ENCODE measurements at regions of chr19 and their contacts with region 1.

Region 1: DNA sequence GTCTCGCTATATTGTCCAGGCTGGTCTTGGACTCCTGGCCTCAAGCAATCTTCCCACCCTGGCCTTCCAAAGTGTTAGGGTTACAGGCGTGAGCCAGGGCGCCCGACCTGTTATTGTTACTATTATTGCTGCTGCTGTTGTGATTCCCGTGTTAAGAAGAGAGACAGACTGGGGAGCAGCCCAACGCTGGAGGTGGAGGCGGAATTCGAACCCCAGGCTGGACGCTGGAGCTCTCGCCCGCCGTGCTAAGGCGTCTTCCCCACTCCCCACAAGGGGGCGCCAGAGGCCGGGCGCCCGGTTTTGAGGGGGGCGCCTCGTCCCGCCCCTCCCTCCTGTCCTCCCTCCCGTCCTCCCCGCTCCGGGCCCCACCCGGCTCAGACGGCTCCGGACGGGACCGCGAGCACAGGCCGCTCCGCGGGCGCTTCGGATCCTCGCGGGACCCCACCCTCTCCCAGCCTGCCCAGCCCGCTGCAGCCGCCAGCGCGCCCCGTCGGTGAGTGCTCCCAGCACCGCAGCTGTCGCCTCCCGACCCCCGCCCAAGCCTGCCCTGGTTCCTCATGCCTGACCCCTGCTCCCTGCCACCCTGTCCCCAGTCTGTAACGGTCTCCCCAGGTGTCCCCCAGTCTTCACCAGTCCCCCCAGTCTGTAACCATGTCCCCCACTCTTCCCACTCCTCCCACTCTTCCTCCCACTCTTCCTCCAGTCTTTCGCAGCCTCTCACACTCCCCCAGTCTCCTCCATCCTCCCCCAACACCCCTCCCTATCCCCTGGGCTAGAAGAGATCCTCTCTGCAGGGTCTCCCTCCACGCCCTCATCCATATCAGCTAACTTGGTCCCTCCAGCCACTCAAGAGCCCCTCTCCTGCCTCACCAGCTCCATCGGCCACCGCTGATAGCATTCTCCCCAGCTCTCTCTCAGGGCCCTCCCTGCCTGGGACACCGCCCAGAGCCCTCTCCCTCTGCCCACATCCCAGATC is at the start of gene EHD2:
- DNase-seq: no peak
- ATAC-seq: peak; percentile 63
- H3K4me3 ChIP-seq: no peak within 1 kb of the TSS
- H3K27ac ChIP-seq: no peak within 1 kb of the TSS
- H3K4me1 ChIP-seq: no peaks in the 10 kb centered on the region
- H3K27me3 ChIP-seq: no peaks in the 10 kb centered on the region
- CTCF ChIP-seq: peak; percentile 43 to 75 (median 52)
- EP300 ChIP-seq: no peak
- POLR2A ChIP-seq: no peak
- RAD21 ChIP-seq: peak; percentile 46
- polyA plus RNA-seq, gene EHD2: not detected

Region 2: DNA sequence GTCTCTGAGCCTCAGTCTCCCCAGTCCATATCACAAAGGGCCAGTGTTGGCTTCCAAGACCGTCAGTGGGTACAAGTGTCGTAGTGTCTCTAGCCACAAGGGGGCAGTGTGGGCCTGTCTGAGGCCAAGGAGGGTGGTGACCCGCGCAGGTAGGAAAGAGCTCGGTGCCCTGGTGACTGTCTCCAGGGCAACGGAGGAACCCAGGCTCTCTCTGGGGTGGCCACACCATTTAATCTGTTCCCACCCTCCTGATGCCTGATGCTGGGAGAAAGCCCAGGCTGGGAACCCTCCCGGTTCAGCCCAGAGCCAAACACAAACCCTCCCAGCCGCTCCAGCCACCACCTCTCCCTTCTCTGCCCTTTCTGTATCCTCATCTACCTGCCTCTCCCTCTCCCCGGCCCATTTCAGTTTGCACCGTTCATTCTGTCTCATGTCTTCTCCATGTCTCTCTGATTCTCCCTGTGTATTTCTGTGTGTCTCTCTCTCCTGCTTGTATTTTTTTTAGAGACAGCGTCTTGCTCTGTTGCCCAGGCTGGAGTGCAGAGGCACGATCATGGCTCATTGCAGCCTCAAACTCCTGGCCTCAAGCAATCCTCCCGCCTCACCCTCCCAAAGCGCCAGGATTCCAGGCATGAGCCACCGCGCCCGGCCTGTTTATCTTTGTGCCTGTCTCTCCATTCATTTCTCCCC is 276.5 kb before region 1 on chr19:
- CTCF ChIA-PET with region 1: interaction called, 163 read pairs
- POLR2A ChIA-PET with region 1: no interaction called
- RAD21 ChIA-PET with region 1: interaction called, 47 read pairs
- SMC1A ChIA-PET with region 1: interaction called, 49 read pairs
- in situ Hi-C with region 1: loop called (anchors 5 kb)
- intact Hi-C with region 1: no loop called
- DNase-seq: no peak
- ATAC-seq: peak; percentile 96
- H3K4me3 ChIP-seq: no peak overlapping the region
- H3K27ac ChIP-seq: no peak overlapping the region
- H3K4me1 ChIP-seq: no peaks in the 10 kb centered on the region; the same call in none of the 2 replicates
- H3K27me3 ChIP-seq: no peaks in the 10 kb centered on the region; a peak in 2 of 4 replicates
- CTCF ChIP-seq: peak; percentile 77 to 88 (median 85)
- EP300 ChIP-seq: no peak
- POLR2A ChIP-seq: no peak
- RAD21 ChIP-seq: peak; percentile 95

Region 3: DNA sequence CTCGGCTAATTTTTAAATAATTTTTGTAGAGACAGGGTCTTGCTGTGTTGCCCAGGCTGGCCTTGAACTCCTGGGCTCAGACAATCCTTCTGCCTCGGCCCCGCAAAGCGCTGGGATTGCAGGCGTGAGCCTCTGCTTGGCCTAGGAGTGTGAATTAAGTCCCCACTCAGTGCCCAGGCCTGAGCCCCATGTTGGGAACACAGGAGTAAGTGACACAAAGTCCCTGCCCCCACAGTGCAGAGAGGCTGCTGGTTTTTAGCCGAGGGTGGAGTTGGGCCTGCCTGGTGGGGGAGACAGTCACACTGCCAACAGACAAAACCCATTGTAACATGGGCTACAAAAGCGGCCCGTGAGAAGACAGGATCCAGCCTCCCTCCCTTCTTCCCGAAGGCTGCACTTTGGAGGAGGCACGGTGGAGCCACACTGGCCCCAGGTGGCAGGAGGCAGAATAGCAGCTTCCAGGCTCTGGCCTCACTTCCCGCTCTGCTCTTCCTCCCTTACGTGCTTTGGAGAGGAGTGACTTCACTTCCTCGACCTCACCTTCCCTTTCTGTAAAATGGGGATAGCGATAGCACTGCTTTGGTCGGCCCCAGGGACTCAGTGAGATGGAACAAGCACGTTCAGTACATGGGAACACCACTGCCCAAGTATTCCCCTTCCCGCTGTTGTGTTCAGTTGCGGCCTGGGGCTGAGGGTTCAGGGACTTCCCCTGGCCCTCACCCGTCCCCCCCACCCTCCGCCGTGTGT is 15.3 kb before region 1 on chr19:
- CTCF ChIA-PET with region 1: interaction called, 21 read pairs
- POLR2A ChIA-PET with region 1: no interaction called
- RAD21 ChIA-PET with region 1: interaction called, 3 read pairs
- SMC1A ChIA-PET with region 1: interaction called, 3 read pairs
- in situ Hi-C with region 1: no loop called
- intact Hi-C with region 1: no loop called
- DNase-seq: peak; percentile 20
- ATAC-seq: peak; percentile 83
- H3K4me3 ChIP-seq: no peak overlapping the region
- H3K27ac ChIP-seq: no peak overlapping the region
- H3K4me1 ChIP-seq: no peaks in the 10 kb centered on the region
- H3K27me3 ChIP-seq: no peaks in the 10 kb centered on the region
- CTCF ChIP-seq: peak; percentile 97 to 100 (median 99)
- EP300 ChIP-seq: no peak
- POLR2A ChIP-seq: no peak
- RAD21 ChIP-seq: peak; percentile 98

Region 4: DNA sequence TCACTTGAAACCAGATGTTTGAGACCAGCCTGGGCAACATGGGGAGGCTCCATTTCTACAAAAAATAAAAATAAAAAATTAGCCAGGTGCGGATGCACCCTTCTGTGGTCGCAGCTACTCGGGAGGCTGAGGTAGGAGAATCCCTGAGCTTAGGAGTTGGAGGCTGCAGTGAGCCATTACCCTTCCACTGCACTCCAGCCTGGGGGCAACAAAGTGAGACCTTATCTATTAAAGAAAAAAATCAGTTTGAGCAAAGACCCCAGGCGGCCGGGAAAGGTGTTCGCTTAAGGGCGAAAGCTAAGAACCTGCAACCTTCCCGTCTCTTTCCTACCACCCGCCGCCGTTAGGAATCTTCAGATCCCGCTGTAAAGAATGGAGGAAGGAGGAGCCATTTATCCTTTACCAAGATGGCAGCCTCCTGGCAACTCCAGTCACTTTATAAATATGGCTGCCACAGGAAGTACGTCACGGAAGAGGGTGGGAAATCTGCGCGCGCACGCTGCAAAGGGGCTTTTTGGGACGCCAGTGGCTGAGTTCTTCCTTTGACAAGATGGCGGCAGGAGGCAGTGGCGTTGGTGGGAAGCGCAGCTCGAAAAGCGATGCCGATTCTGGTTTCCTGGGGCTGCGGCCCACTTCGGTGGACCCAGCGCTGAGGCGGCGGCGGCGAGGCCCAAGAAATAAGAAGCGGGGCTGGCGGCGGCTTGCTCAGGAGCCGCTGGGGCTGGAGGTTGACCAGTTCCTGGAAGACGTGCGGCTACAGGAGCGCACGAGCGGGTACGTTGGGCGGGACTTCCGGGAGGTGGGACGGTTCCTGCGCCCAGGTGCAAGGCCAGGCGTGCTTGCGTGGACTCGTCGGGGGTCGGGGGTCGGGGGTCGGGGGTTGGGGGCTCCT is 31.9 kb after region 1 on chr19 and contains the start of gene NOP53:
- CTCF ChIA-PET with region 1: interaction called, 15 read pairs
- POLR2A ChIA-PET with region 1: no interaction called
- RAD21 ChIA-PET with region 1: interaction called, 3 read pairs
- SMC1A ChIA-PET with region 1: no interaction called
- in situ Hi-C with region 1: no loop called
- intact Hi-C with region 1: no loop called
- DNase-seq: peak; percentile 93
- ATAC-seq: peak; percentile 79
- H3K4me3 ChIP-seq: peak within 1 kb of the TSS; percentile 92
- H3K27ac ChIP-seq: peak within 1 kb of the TSS; percentile 95
- H3K4me1 ChIP-seq: peaks cover 16% of the 10 kb centered on the region
- H3K27me3 ChIP-seq: no peaks in the 10 kb centered on the region
- CTCF ChIP-seq: no peak
- EP300 ChIP-seq: no peak
- POLR2A ChIP-seq: peak; percentile 98
- RAD21 ChIP-seq: no peak
- polyA plus RNA-seq, gene NOP53: 6.0 to 32.3 TPM

Region 5: GRCh38 chr19:47790398-47790814 is 77.1 kb after region 1 on chr19:
- CTCF ChIA-PET with region 1: interaction called, 24 read pairs
- POLR2A ChIA-PET with region 1: no interaction called
- RAD21 ChIA-PET with region 1: interaction called, 3 read pairs
- SMC1A ChIA-PET with region 1: no interaction called
- in situ Hi-C with region 1: no loop called
- intact Hi-C with region 1: no loop called
- DNase-seq: no peak
- ATAC-seq: peak; percentile 88
- H3K4me3 ChIP-seq: no peak overlapping the region
- H3K27ac ChIP-seq: no peak overlapping the region
- H3K4me1 ChIP-seq: no peaks in the 10 kb centered on the region
- H3K27me3 ChIP-seq: no peaks in the 10 kb centered on the region
- CTCF ChIP-seq: peak; percentile 56 to 93 (median 87)
- EP300 ChIP-seq: no peak
- POLR2A ChIP-seq: no peak
- RAD21 ChIP-seq: no peak